ENCODE measurements at regions of chr6 and their contacts with region 1.

Region 1: GRCh38 chr6:106194949-106195921 is 109.1 kb downstream of the PRDM1 start:
- DNase-seq: no peak
- H3K4me3 ChIP-seq: no peak overlapping the region
- H3K27ac ChIP-seq: no peak overlapping the region
- H3K4me1 ChIP-seq: no peaks in the 10 kb centered on the region
- H3K27me3 ChIP-seq: no peaks in the 10 kb centered on the region
- CTCF ChIP-seq: no peak
- POLR2A ChIP-seq: no peak

Region 2: DNA sequence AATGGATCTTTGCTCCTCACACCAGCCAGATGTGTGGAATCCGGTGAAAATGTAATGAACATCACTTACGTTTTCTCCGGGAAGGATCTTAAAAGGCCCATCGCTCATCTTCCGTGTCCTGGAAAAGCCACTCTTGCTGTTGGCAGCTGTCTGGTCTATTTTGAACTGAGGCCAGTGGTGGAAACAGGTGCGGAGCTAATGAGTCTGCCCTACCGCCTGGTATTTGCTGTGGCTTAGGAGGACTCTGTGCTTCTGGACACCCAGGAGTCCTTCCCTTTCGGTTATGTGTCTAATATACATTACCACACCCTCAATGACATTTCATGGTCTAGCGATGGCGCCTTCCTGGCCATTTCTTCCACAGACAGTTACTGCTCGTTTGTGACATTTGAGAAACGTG is 528.2 kb before region 1 on chr6:
- CTCF ChIA-PET with region 1: no interaction called
- POLR2A ChIA-PET with region 1: no interaction called
- dilution Hi-C with region 1: no loop called
- intact Hi-C with region 1: no loop called
- DNase-seq: no peak
- H3K4me3 ChIP-seq: no peak overlapping the region
- H3K27ac ChIP-seq: no peak overlapping the region
- H3K4me1 ChIP-seq: no peaks in the 10 kb centered on the region
- H3K27me3 ChIP-seq: no peaks in the 10 kb centered on the region
- CTCF ChIP-seq: no peak
- POLR2A ChIP-seq: no peak

Region 3: DNA sequence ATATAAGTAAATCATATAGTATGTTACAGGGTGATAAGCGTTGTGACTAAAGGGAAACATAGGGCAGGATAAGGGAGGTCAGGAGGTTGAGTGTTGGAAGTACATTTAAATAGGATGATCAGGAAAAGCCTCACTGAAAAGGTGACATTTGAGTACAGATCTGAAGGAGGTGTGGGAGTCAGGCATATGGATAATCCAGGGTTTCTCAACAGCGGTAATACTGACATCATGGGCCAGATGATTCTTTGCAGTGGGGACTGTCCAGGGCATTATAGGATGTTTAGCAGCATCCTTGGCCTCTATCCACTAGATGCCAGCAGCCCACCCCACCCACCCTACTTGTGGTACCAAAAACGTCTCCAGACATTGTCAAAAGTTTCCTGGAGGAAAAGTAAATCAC is 499.8 kb before region 1 on chr6:
- CTCF ChIA-PET with region 1: no interaction called
- POLR2A ChIA-PET with region 1: no interaction called
- dilution Hi-C with region 1: no loop called
- intact Hi-C with region 1: no loop called
- DNase-seq: no peak
- H3K4me3 ChIP-seq: no peak overlapping the region
- H3K27ac ChIP-seq: no peak overlapping the region
- H3K4me1 ChIP-seq: no peaks in the 10 kb centered on the region
- H3K27me3 ChIP-seq: no peaks in the 10 kb centered on the region
- CTCF ChIP-seq: no peak
- POLR2A ChIP-seq: no peak

Region 4: DNA sequence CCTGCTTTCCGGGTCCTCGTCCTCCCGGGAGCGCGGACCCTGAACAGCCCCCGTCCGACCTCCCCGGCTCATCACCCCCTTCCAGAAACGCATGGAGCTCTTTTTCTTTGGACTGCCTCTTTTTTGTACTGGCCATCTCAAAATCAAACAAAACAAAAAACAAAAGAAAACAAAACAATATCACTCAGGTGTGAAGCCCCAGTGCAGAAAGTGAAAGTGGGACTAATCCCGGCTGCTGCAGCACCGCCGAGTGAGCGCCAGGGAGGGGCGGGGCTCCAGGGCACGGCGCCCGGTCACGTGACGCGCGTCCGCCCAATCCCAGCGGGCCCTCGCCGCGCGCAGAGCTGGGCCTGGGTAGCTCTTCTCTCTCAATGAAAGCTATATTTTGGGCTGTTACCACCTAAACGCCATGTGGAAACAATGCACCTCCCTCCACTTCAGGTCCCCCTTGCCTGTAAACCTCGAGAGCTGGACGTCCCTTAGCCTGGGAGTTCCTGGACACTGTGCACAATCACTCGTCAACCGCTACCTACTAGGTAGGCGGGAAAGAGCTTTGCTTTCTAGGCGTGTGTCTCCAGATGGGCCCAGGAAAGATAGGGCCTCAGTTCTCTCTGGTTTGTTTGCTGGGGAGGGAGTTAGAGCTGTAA is 202.8 kb before region 1 on chr6:
- CTCF ChIA-PET with region 1: no interaction called
- POLR2A ChIA-PET with region 1: no interaction called
- dilution Hi-C with region 1: no loop called
- intact Hi-C with region 1: loop called (anchors 10 kb)
- DNase-seq: peak; percentile 76
- H3K4me3 ChIP-seq: peak overlapping the region; percentile 55 to 74 (median 72)
- H3K27ac ChIP-seq: no peak overlapping the region
- H3K4me1 ChIP-seq: peaks cover 22% of the 10 kb centered on the region
- H3K27me3 ChIP-seq: peaks cover 81 to 93% of the 10 kb centered on the region in 2 experiments
- CTCF ChIP-seq: no peak
- POLR2A ChIP-seq: no peak

Measured in endothelial cell of umbilical vein (primary cell).